CD8-positive, alpha-beta memory T cell (primary cell): ENCODE measurements at regions of chrX and their contacts with region 1.

Region 1: DNA sequence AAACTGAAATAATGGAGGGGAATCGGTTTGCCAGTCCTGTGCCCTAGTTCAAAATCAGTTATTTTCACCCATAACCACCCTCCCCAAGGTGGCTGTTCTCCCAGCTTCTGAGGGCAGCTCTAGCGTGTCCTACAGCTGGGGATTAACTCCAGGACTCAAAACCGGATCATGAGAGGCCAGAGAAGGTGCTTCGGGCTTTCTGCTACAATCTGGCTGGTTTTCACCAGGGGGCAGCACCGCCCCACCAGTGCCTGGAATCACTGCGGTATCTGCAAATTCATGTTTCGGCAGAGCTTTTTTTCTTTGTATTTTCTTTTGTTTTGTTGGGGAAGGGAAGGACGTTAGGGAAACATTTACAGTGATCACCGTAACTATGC is 28.4 kb downstream of the PDHA1 start:
- DNase-seq: peak; percentile 42 to 66 (median 47)
- H3K4me3 ChIP-seq: peak overlapping the region; percentile 60
- H3K4me3 Mint-ChIP-seq: peak overlapping the region; percentile 83 to 94 (median 84)
- H3K27ac ChIP-seq: no peak overlapping the region
- H3K27ac Mint-ChIP-seq: peak overlapping the region in 6 of 8 donors; percentile 7 to 89 (median 53)
- H3K4me1 ChIP-seq: no peaks in the 10 kb centered on the region
- H3K4me1 Mint-ChIP-seq: peaks cover 4 to 8% (median 8%) of the 10 kb centered on the region in 3 donors
- H3K27me3 ChIP-seq: no peaks in the 10 kb centered on the region
- H3K27me3 Mint-ChIP-seq: no peaks in the 10 kb centered on the region

Region 2: GRCh38 chrX:19360903-19361302 is 11.3 kb before region 1 on chrX:
- CTCF ChIA-PET with region 1: interaction called, 12 read pairs
- POLR2A ChIA-PET with region 1: no interaction called
- DNase-seq: no peak
- H3K4me3 ChIP-seq: no peak overlapping the region
- H3K4me3 Mint-ChIP-seq: no peak overlapping the region
- H3K27ac ChIP-seq: no peak overlapping the region
- H3K27ac Mint-ChIP-seq: peak overlapping the region in 1 of 8 donors; percentile 22
- H3K4me1 ChIP-seq: no peaks in the 10 kb centered on the region
- H3K4me1 Mint-ChIP-seq: no peaks in the 10 kb centered on the region
- H3K27me3 ChIP-seq: no peaks in the 10 kb centered on the region
- H3K27me3 Mint-ChIP-seq: peaks cover 0 to 2% of the 10 kb centered on the region in 2 donors